Cardiac septum (tissue), 1 donor: ENCODE measurements at regions of chr19 and their contacts with region 1.

Region 1: GRCh38 chr19:42024622-42025111 is 30.6 kb upstream of the ATP1A3 start:
- DNase-seq: peak; percentile 83

Region 2: DNA sequence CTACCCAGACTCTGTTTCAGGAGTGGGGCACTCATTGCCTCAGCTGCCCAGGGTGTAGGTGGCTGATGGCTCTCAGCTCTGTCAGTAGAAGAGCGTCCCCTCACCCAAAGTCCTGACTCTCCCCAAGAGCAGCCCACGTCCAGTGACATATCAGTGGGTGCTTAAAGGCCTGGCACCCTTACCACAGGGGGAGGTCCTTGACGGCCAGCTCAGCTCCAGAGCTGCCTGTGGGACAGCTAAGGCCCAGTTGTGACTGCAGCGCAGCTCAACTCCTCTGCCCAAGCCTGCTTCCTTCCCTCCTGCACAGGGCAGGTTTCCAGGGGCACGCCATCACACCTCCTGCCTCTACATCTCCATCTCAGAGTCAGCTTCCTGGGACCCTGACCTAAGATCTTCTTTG is 13.0 kb after region 1 on chr19:
- intact Hi-C with region 1: loop called (anchors 1 kb)
- DNase-seq: no peak